Dorsolateral prefrontal cortex (tissue), 120 donors: ENCODE measurements at regions of chr5 and their contacts with region 1.

Region 1: DNA sequence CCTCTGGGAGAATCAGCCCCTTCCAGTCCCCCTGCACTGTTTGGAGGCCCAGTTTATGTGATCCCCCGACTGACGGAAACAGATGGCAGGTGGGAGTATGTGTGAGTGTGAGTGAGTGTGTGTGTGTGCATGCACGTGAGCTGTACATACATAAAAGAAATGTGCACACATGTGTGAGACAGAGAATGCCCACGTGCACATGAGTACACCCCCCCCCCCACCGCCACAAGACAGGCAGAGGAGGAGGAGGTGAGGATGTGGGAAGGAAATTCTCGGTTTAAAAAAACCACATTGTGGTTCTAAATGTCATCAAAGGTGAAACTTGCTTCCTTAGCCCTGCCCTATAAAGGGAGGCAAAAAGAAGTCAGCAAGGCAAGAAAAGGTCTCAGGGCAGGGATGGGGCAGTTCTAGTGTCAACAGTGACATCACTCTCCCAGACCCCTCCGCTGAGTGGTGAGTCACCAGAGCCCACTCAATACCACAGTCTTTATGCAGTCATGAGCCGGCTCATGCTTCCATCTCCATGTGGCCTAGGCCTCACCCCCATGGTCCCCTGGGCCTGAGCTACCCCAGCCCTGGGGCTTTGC is 79.2 kb upstream of the HSPA9 start:
- DNase-seq: no peak
- H3K4me3 ChIP-seq: no peak overlapping the region
- H3K27ac ChIP-seq: peak overlapping the region in 55 of 59 donors; percentile 28 to 99 (median 92)
- H3K27me3 ChIP-seq: no peaks in the 10 kb centered on the region
- CTCF ChIP-seq: no peak

Region 2: GRCh38 chr5:138210985-138211384 is 443.4 kb before region 1 on chr5:
- intact Hi-C with region 1: no loop called
- DNase-seq: no peak
- H3K4me3 ChIP-seq: peak overlapping the region in 5 of 59 donors; percentile 10 to 98 (median 78)
- H3K27ac ChIP-seq: no peak overlapping the region
- H3K27me3 ChIP-seq: no peaks in the 10 kb centered on the region
- CTCF ChIP-seq: no peak

Region 3: GRCh38 chr5:138282920-138283742 is 371.2 kb before region 1 on chr5:
- intact Hi-C with region 1: no loop called
- DNase-seq: peak in 5 of 10 donors; percentile 13 to 42 (median 31)
- H3K4me3 ChIP-seq: no peak overlapping the region
- H3K27ac ChIP-seq: no peak overlapping the region
- H3K27me3 ChIP-seq: no peaks in the 10 kb centered on the region
- CTCF ChIP-seq: peak in 40 of 56 donors; percentile 13 to 60 (median 30)

Region 4: GRCh38 chr5:138575194-138576015 is 79.0 kb before region 1 on chr5 and contains the start of gene HSPA9:
- intact Hi-C with region 1: loop called in 1 of 2 experiments (anchors 5 kb)
- DNase-seq: peak; percentile 97 to 99 (median 98)
- H3K4me3 ChIP-seq: peak within 1 kb of the TSS; percentile 74 to 100 (median 98)
- H3K27ac ChIP-seq: peak within 1 kb of the TSS; percentile 94 to 100 (median 100)
- H3K27me3 ChIP-seq: no peaks in the 10 kb centered on the region
- CTCF ChIP-seq: peak in 38 of 56 donors; percentile 8 to 50 (median 22)
- total RNA-seq, gene HSPA9: 167 to 280 (median 215) TPM

Region 5: GRCh38 chr5:138752951-138753793 is 98.8 kb after region 1 on chr5 and contains the start of gene CTNNA1:
- intact Hi-C with region 1: loop called in 1 of 2 experiments (anchors 5 kb)
- DNase-seq: peak; percentile 5 to 69 (median 44)
- H3K4me3 ChIP-seq: peak within 1 kb of the TSS; percentile 52 to 93 (median 81)
- H3K27ac ChIP-seq: peak within 1 kb of the TSS; percentile 61 to 96 (median 92)
- H3K27me3 ChIP-seq: peaks cover 0 to 14% (median 0%) of the 10 kb centered on the region in 45 donors
- CTCF ChIP-seq: peak in 5 of 56 donors; percentile 4 to 26 (median 16)
- total RNA-seq, gene CTNNA1: 120 to 434 (median 206) TPM

Region 6: DNA sequence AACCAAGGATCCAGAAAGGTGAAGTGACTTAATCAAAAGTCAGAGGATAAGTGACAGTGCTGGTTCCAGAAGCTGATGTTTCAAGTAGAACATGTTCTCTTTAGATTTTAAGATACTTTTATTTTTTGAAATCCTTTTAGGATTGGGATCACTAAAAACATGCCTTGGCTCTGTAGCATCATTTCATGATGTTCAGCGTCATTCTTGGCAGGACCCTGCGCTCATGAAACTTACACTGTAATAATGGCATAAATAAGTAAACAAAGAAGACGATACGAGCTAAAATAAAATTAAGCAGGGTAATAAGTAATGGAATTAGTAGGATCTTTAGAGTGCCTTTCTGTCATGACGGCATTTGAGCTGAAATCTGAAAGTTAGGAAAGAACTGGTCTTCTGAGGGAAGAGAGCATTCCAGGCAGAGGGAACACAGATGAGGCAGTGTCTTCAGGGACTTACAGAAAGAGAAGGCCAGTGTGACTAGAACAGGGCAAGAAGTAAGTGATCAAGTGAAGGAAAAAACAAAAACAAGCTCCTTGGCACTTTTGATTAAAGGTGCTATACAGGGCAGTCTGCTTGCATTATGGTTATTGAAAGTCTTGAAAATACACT is 118.7 kb after region 1 on chr5:
- intact Hi-C with region 1: loop called in 1 of 2 experiments (anchors 5 kb)
- DNase-seq: no peak
- H3K4me3 ChIP-seq: peak overlapping the region in 8 of 59 donors; percentile 4 to 42 (median 20)
- H3K27ac ChIP-seq: peak overlapping the region in 21 of 59 donors; percentile 9 to 82 (median 45)
- H3K27me3 ChIP-seq: no peaks in the 10 kb centered on the region
- CTCF ChIP-seq: no peak